Activated CD4-positive, alpha-beta T cell treated with anti-CD3 and anti-CD28 coated beads for 36 hours (primary cell): ENCODE measurements at regions of chr9 and their contacts with region 1.

Region 1: DNA sequence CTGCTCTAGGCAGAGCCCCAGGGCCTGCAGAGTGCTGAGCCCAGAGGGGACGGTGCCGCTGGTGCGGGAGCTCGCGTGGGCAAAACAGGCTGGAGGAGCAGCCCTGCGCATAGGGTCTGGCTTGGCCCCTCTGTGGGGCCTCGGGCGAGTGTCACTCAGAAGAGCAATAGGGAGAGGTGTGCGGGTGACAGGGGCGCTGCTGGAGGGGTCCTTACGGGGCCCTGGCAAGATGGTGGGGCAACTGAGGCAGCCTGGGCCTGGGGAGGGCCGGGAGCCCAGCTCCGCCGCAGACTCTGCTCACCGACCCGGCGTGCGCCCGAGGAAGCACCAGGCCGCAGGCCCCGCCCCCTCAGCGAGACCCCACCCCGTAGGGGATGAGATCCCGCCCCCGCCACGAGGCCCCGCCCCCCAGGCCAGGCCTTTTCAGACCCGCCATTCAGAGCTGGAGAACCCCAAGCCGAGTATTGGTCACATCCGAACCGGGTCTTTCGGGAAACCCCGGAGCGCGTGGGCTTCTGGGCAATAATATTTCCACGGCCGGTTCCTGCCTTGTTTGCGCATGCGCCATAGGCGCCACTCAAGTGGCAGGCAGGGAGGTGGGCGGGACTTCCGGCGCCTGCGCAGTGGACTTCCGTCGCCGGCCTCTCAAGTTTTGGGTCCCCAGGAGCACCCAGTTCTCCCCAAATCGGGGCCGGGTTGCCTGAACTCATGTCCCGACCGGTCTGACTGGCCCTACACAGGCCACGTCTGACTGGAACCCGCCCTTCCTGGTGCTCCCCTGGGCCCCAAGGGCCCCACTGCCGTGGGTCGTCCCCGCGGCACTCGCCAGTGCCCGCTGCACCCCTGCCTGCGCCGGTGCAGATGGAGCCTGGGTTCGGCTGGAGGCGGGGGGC is 1.3 kb upstream of the RNF208 start:
- DNase-seq: peak; percentile 99
- ATAC-seq: peak; percentile 90
- H3K4me3 Mint-ChIP-seq: peak overlapping the region; percentile 80
- H3K27ac Mint-ChIP-seq: peak overlapping the region; percentile 83
- H3K4me1 Mint-ChIP-seq: peaks cover 8% of the 10 kb centered on the region
- H3K27me3 Mint-ChIP-seq: peaks cover 2% of the 10 kb centered on the region

Region 2: DNA sequence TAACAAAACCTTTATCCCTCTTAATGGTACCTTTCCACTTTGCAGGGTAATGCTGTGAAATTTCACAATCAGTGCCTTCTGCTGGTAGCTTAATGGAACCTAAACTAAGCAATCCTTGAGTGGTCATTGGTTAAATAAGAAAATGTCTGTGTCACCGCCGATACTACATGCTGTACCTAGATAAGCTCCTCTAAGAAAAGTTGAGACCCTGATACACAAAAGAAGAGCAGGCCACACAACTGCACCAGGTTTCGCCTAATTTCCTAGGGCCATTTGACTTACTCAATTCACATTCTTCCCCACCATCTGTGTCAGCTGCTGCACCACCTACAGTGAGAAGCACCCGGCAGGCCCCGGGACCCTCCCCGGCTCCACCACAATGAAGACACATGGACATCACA is 348.2 kb before region 1 on chr9:
- CTCF ChIA-PET with region 1: no interaction called
- POLR2A ChIA-PET with region 1: no interaction called
- intact Hi-C with region 1: no loop called
- DNase-seq: no peak
- ATAC-seq: no peak
- H3K4me3 Mint-ChIP-seq: no peak overlapping the region
- H3K27ac Mint-ChIP-seq: no peak overlapping the region
- H3K4me1 Mint-ChIP-seq: peaks cover under 1% of the 10 kb centered on the region
- H3K27me3 Mint-ChIP-seq: no peaks in the 10 kb centered on the region

Region 3: GRCh38 chr9:136944519-136945279 is 278.6 kb before region 1 on chr9 and contains the starts of genes C8G and FBXW5:
- CTCF ChIA-PET with region 1: no interaction called
- POLR2A ChIA-PET with region 1: no interaction called
- intact Hi-C with region 1: loop called in 1 of 2 experiments (anchors 1 kb)
- DNase-seq: peak; percentile 97
- ATAC-seq: peak; percentile 84
- H3K4me3 Mint-ChIP-seq: peak within 1 kb of the TSS; percentile 77
- H3K27ac Mint-ChIP-seq: peak within 1 kb of the TSS; percentile 88
- H3K4me1 Mint-ChIP-seq: peaks cover 9% of the 10 kb centered on the region
- H3K27me3 Mint-ChIP-seq: no peaks in the 10 kb centered on the region
- total RNA-seq, gene C8G: 0.77 TPM in 1 of 2 experiments, not detected in the other
- total RNA-seq, gene FBXW5: 54.4 to 66.4 TPM

Region 4: GRCh38 chr9:137046098-137046787 is 177.1 kb before region 1 on chr9 and contains the start of gene NPDC1:
- CTCF ChIA-PET with region 1: interaction called, 3 read pairs
- POLR2A ChIA-PET with region 1: no interaction called
- intact Hi-C with region 1: loop called in 1 of 2 experiments (anchors 10 kb)
- DNase-seq: peak; percentile 92
- ATAC-seq: peak; percentile 65
- H3K4me3 Mint-ChIP-seq: peak within 1 kb of the TSS; percentile 61
- H3K27ac Mint-ChIP-seq: no peak within 1 kb of the TSS
- H3K4me1 Mint-ChIP-seq: peaks cover 12% of the 10 kb centered on the region
- H3K27me3 Mint-ChIP-seq: peaks cover 34% of the 10 kb centered on the region
- total RNA-seq, gene NPDC1: 21.0 to 23.1 TPM

Region 5: GRCh38 chr9:137114610-137115391 is 108.5 kb before region 1 on chr9 and contains the start of gene DPP7:
- CTCF ChIA-PET with region 1: interaction called, 6 read pairs
- POLR2A ChIA-PET with region 1: no interaction called
- intact Hi-C with region 1: loop called (anchors 1 kb)
- DNase-seq: peak; percentile 89
- ATAC-seq: peak; percentile 90
- H3K4me3 Mint-ChIP-seq: peak within 1 kb of the TSS; percentile 72
- H3K27ac Mint-ChIP-seq: peak within 1 kb of the TSS; percentile 51
- H3K4me1 Mint-ChIP-seq: peaks cover 13% of the 10 kb centered on the region
- H3K27me3 Mint-ChIP-seq: no peaks in the 10 kb centered on the region
- total RNA-seq, gene DPP7: 188 to 204 TPM

Region 6: DNA sequence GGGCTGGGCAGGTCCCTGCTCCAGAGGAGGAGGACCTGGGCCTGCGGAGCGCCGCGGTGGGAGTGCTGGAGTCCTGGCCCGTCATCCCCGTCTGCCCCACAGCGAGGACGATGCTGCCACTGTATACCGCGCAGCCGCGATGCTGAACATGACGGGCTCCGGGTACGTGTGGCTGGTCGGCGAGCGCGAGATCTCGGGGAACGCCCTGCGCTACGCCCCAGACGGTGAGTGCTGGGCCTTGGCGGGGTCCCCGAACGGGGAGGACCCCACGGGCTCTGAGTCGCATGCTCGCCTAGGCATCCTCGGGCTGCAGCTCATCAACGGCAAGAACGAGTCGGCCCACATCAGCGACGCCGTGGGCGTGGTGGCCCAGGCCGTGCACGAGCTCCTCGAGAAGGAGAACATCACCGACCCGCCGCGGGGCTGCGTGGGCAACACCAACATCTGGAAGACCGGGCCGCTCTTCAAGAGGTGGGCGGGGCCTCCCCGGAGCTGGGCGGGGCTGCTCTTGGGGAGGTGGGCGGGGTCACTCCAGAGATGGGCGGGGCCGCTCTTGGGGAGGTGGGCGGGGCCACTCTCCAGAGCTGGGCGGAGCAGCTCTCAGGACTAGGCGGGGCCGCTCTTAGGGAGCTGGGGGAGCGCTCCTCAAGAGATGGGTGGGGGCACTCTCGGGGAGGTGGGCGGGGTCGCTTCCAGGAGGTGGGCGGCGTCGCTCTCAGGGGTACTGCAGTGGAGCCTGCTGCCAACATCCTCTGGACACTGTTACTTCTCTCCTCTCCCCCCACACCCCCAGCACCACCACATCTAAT is 66.6 kb before region 1 on chr9:
- CTCF ChIA-PET with region 1: no interaction called
- POLR2A ChIA-PET with region 1: no interaction called
- intact Hi-C with region 1: loop called in 1 of 2 experiments (anchors 1 kb)
- DNase-seq: peak; percentile 85
- ATAC-seq: peak; percentile 79
- H3K4me3 Mint-ChIP-seq: peak overlapping the region; percentile 36
- H3K27ac Mint-ChIP-seq: no peak overlapping the region
- H3K4me1 Mint-ChIP-seq: peaks cover 11% of the 10 kb centered on the region
- H3K27me3 Mint-ChIP-seq: peaks cover 30% of the 10 kb centered on the region

Region 7: DNA sequence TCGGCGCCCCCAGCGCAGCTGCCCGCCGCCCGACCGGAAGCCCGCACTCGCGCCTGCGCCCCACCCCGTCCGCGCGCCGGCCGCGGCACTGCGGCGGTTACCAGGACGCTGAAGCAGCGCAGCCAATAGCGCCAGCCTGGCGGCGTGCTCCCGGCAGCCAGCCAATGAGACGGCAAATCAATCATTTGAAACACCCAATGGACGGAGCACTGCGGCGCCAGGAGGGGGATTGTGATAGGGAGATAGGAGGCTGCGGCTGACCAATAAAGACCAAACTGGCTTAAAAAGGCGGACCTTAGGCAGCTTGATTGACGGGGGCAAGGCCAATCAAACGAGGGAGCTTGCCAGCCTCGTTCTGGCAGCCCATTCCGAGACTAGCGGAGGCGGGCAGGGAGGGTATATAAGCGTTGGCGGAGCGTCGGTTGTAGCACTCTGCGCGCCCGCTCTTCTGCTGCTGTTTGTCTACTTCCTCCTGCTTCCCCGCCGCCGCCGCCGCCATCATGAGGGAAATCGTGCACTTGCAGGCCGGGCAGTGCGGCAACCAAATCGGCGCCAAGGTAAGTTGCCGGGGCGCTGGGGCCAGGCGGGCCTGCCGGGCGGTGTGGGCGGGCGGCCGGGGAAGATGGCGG is 17.7 kb after region 1 on chr9 and contains the start of gene TUBB4B:
- CTCF ChIA-PET with region 1: interaction called, 23 read pairs
- POLR2A ChIA-PET with region 1: interaction called, 10 read pairs
- intact Hi-C with region 1: loop called (anchors 1 kb)
- DNase-seq: peak; percentile 98
- ATAC-seq: peak; percentile 84
- H3K4me3 Mint-ChIP-seq: peak within 1 kb of the TSS; percentile 83
- H3K27ac Mint-ChIP-seq: peak within 1 kb of the TSS; percentile 87
- H3K4me1 Mint-ChIP-seq: peaks cover 27% of the 10 kb centered on the region
- H3K27me3 Mint-ChIP-seq: no peaks in the 10 kb centered on the region
- total RNA-seq, gene TUBB4B: 264 to 278 TPM